MCF 10A (cell line): ENCODE measurements at regions of chr4 and their contacts with region 1.

Region 1: DNA sequence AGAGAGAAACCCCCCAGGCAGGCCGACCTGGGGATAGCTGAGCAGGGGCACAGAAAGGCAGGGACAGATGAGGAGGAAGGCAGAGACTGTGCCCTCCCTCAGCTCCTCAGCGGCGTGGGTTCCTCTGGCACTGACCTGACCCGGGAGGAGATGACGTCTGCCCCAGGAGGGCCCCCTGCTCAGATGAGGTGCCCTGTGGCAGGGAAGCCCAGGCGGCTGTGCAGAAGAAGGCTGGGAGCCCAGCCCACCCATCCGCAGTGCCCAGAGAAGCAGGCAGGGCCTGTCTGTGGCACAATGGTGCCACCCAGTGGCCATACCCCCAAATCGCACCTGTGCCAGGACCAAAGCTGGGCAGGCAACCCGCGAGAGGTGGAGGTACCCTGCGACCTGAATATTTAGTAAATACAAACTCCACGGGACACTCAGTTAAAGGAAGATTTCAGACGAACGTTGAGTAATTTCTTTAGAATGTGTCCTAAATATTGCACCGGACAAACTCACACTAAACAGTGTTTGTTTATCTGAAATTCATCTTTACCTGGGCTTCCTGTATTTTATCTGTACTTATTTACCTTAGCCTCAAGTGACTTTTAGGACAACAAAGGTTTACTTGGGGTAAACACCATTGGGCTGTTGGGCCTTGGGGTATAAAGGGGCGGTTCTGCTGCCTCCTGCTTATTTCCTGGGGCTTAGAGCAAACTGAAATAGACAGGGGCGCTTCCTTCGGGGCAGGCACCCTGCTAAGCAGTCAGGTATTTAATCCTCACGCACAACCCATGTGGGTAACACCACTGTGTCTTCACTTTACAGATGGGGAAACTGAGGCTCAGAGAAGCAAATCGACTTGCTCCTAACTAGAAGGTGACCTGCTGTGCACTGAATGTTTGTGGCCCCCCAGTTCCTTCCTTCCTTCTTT is 46.5 kb upstream of the HMX1 start:
- DNase-seq: peak; percentile 56
- H3K4me3 Mint-ChIP-seq: no peak overlapping the region
- H3K27ac Mint-ChIP-seq: no peak overlapping the region
- H3K4me1 Mint-ChIP-seq: no peaks in the 10 kb centered on the region
- H3K27me3 Mint-ChIP-seq: peaks cover 31% of the 10 kb centered on the region
- CTCF ChIP-seq: peak; percentile 92

Region 2: GRCh38 chr4:8854931-8855330 is 63.2 kb before region 1 on chr4:
- CTCF ChIA-PET with region 1: no interaction called
- POLR2A ChIA-PET with region 1: no interaction called
- intact Hi-C with region 1: no loop called
- DNase-seq: peak; percentile 26
- H3K4me3 Mint-ChIP-seq: no peak overlapping the region
- H3K27ac Mint-ChIP-seq: no peak overlapping the region
- H3K4me1 Mint-ChIP-seq: no peaks in the 10 kb centered on the region
- H3K27me3 Mint-ChIP-seq: peaks cover 13% of the 10 kb centered on the region
- CTCF ChIP-seq: no peak

Region 3: DNA sequence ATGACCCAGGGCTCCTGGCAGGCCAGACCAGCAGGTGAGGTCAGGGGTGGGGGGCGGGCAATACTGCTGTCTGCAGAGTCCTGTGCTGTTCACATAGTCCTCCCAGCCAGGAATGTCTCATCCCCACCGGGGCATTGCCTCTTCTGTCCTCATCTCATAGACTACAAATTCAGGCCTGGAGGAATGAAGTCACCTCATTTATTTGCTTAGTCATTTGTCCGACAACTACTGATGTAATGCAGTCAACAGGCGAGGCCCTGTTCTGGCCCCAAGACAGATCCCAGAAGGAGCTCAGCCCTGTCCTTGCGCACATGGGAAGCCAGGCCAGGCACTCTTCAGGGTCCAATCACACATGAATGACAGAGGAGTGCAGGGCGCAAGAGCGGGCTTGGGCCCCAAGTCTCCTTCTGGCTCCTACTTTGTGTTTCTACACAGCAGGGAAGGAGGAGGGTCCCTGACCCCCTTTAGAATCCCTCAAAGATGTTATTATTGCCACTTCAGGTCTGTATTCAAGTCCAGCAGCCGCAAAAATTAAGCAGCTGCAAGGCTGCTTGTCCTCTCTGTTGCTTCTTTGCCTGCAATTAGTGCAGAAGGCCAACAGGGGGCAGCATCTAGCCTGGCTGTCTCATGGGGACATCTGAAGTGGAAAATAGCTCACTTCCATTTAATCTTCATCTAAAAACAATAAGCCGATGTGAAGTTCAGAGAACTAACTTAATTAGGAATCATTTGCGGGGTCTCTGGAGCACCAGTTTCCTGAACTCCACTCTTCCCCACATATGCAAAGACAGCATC is 31.3 kb before region 1 on chr4:
- CTCF ChIA-PET with region 1: interaction called, 30 read pairs
- POLR2A ChIA-PET with region 1: no interaction called
- intact Hi-C with region 1: no loop called
- DNase-seq: peak; percentile 5
- H3K4me3 Mint-ChIP-seq: no peak overlapping the region
- H3K27ac Mint-ChIP-seq: no peak overlapping the region
- H3K4me1 Mint-ChIP-seq: no peaks in the 10 kb centered on the region
- H3K27me3 Mint-ChIP-seq: no peaks in the 10 kb centered on the region
- CTCF ChIP-seq: peak; percentile 37

Region 4: DNA sequence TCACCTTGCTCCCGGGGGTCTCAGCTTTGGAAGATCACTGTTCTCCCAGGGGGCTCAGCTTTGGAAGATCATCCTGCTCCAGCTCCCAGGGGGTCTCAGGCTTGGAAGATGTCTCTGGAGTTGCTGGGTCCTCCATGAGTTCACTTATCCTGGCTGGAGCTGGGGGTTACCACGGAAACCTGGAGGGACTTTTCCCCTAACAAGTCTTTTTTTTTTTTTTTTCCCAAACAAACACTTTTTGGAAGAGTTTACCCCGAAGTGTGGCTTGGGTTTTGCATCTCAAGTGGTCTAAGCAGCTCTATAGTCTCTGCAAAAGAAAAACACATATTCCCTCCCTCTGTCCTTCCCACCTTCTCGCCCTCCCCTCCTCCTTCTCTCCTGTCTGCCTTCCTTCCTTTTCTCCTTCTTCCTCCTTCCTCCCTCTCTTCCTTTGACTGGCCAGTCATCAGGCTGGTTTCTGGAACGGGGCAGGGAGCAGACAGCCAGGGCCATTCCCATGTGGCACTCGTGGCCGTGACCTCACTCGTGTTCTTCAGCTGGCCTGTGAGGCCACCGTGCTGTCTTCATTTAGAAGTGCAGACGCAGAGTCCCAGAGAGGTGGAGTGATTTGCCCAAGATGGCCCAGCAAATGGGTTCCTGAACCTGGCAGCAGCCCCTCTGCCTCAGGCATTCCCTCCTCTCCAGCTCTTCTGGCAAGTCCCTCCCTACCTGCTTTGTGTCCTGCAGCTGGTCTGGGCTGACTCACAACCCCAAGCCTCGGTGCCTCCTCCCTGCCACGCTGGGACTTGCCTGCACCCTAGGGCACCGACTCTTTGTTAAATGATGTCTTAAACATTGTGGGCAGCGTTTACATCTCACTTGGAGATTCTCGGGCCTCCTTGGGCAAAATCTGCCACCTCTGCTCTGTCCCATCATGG is 20.6 kb before region 1 on chr4:
- CTCF ChIA-PET with region 1: interaction called, 22 read pairs
- POLR2A ChIA-PET with region 1: no interaction called
- intact Hi-C with region 1: no loop called
- DNase-seq: peak; percentile 68
- H3K4me3 Mint-ChIP-seq: no peak overlapping the region
- H3K27ac Mint-ChIP-seq: no peak overlapping the region
- H3K4me1 Mint-ChIP-seq: no peaks in the 10 kb centered on the region
- H3K27me3 Mint-ChIP-seq: no peaks in the 10 kb centered on the region
- CTCF ChIP-seq: no peak

Region 5: DNA sequence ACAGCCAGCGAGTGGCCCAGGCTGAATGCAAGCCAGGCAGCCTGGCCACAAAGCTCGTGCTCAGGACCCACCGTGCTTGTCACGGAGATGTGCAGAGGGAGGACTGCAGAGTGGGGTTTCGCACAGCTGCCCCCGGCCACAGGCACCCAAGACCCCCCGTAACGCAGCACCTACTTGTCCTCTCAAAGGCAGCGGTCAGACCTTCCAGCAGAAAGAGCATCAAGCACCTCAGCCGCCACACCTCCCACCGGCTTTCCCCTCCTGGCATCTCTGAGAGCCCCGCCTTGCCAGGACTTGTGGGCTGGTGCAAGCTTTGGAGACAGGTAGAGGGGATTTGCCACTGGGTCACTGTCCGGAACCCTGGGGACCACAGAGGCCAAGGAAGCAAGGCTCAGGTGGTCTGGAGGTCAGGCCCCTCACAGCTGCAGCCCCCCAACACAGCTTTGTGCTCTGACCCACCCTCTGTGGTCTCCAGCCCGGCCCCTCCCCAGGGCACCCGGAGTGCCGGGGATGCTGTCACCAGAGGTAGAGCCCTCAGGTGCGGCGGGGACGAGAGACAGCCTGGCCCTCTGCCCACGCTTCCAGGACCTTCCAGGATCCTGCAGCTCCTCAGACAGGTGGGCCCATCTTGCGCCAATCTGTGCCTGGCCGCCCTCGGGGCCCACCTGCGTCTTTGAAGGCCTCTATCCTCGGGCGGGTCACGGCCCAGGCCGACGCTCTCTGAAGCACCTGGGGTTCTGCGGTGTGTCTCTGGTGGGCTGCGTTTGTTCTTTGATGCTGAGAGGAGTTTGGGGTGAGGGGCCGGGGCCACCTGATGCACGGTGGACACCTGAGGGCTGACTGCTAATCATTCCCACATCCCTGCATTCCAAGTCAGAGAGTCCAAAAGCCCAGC is 12.1 kb before region 1 on chr4:
- CTCF ChIA-PET with region 1: interaction called, 12 read pairs
- POLR2A ChIA-PET with region 1: interaction called, 3 read pairs
- intact Hi-C with region 1: no loop called
- DNase-seq: no peak
- H3K4me3 Mint-ChIP-seq: no peak overlapping the region
- H3K27ac Mint-ChIP-seq: no peak overlapping the region
- H3K4me1 Mint-ChIP-seq: no peaks in the 10 kb centered on the region
- H3K27me3 Mint-ChIP-seq: peaks cover 29% of the 10 kb centered on the region
- CTCF ChIP-seq: no peak